ENCODE measurements at regions of chr2 and their contacts with region 1.

Region 1: GRCh38 chr2:39124000-39124745 is 3.3 kb upstream of the SOS1 start:
- DNase-seq: peak; percentile 93 to 96
- H3K4me3 ChIP-seq: peak overlapping the region; percentile 76 to 80
- H3K27ac ChIP-seq: peak overlapping the region; percentile 90 to 94
- H3K4me1 ChIP-seq: peaks cover 0 to 61% (median 25%) of the 10 kb centered on the region in 4 donors
- H3K27me3 ChIP-seq: no peaks in the 10 kb centered on the region
- CTCF ChIP-seq: peak in 1 of 2 experiments; percentile 38

Region 2: DNA sequence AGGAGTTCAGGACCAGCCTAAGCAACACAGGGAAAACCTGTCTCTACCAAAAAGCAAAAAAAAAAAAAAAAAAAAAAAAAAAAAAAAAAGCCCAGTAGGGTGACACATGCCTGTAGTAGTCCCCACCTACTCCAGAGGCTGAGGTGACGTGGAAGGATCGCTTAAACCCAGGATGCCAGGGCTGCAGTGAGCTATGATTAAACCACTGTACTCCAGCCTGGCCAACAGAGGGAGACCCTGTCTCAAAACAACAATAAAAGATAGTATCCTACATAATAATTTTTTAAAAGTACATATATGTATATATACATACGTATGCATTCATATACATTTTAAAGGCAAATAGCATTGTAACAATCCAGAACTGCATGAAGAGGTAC is 55.0 kb before region 1 on chr2:
- intact Hi-C with region 1: loop called (anchors 10 kb)
- DNase-seq: no peak
- H3K4me3 ChIP-seq: no peak overlapping the region
- H3K27ac ChIP-seq: no peak overlapping the region
- H3K4me1 ChIP-seq: peaks cover 0 to 21% (median 0%) of the 10 kb centered on the region in 4 donors
- H3K27me3 ChIP-seq: no peaks in the 10 kb centered on the region
- CTCF ChIP-seq: no peak

Region 3: DNA sequence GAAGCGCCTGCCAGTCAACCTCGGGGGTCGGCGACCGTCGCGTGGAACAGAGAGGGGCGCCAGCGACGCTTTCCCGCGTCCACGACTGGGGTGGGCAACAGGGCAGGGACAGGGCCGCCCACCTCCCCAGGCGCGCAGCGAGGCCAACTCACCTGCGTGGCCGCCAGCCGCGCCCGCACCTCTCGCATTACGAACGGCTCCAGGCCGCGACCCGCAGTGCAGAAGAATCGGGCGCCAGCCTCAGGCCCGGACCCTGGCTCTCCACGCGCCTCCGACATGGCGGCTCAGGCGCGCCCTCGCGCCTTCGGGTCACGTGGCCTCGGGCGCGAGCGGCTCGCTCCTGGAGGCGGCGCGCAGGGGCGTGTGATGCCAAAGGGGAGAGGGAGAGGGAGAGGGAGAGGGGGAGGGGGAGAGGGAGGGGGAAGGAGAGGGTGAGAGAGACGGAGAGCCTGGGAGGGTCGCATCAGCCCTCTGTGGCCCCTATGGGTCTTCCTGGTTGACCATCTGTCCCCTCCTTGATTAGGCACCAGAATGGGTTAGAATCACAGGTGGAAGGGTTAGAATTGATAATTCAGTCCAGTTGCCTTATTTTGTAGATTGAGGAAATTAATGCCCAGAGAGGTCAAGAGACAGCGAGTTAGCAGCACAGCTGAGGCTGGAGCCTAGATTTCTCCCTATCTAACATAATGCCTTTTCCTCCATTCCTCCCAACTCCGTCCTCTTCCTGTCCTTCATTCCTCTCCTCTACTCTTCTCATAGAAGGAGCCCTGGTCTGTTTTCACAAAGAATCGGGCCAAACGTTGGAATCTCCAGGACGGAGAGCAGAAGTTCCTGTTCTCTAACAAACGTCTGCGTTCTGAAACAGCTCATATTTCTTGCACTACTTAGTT is 655.0 kb after region 1 on chr2 and contains the start of gene THUMPD2:
- intact Hi-C with region 1: loop called (anchors 10 kb)
- DNase-seq: peak; percentile 66 to 78
- H3K4me3 ChIP-seq: peak within 1 kb of the TSS; percentile 82 to 96
- H3K27ac ChIP-seq: peak within 1 kb of the TSS; percentile 88 to 95
- H3K4me1 ChIP-seq: peaks cover 0 to 50% (median 16%) of the 10 kb centered on the region in 4 donors
- H3K27me3 ChIP-seq: no peaks in the 10 kb centered on the region
- CTCF ChIP-seq: no peak

Region 4: GRCh38 chr2:40043191-40043590 is 919.0 kb after region 1 on chr2:
- intact Hi-C with region 1: no loop called
- DNase-seq: no peak
- H3K4me3 ChIP-seq: no peak overlapping the region
- H3K27ac ChIP-seq: no peak overlapping the region
- H3K4me1 ChIP-seq: peaks cover 0 to under 1% (median 0%) of the 10 kb centered on the region in 4 donors
- H3K27me3 ChIP-seq: peaks cover 0 to 3% of the 10 kb centered on the region in 2 donors
- CTCF ChIP-seq: no peak